ENCODE measurements at regions of chr6 and their contacts with region 1.

Region 1: GRCh38 chr6:85593438-85594196 is at the start of gene SNX14:
- DNase-seq: peak; percentile 94 to 97 (median 96)
- H3K4me3 ChIP-seq: peak within 1 kb of the TSS; percentile 59
- H3K27ac ChIP-seq: peak within 1 kb of the TSS; percentile 80 to 91
- H3K4me1 ChIP-seq: peaks cover 4% of the 10 kb centered on the region
- H3K27me3 ChIP-seq: no peaks in the 10 kb centered on the region
- CTCF ChIP-seq: peak in 1 of 3 donors; percentile 50
- EP300 ChIP-seq: no peak
- POLR2A ChIP-seq: peak; percentile 68
- total RNA-seq, gene SNX14: 44.1 to 80.2 (median 64.0) TPM

Region 2: DNA sequence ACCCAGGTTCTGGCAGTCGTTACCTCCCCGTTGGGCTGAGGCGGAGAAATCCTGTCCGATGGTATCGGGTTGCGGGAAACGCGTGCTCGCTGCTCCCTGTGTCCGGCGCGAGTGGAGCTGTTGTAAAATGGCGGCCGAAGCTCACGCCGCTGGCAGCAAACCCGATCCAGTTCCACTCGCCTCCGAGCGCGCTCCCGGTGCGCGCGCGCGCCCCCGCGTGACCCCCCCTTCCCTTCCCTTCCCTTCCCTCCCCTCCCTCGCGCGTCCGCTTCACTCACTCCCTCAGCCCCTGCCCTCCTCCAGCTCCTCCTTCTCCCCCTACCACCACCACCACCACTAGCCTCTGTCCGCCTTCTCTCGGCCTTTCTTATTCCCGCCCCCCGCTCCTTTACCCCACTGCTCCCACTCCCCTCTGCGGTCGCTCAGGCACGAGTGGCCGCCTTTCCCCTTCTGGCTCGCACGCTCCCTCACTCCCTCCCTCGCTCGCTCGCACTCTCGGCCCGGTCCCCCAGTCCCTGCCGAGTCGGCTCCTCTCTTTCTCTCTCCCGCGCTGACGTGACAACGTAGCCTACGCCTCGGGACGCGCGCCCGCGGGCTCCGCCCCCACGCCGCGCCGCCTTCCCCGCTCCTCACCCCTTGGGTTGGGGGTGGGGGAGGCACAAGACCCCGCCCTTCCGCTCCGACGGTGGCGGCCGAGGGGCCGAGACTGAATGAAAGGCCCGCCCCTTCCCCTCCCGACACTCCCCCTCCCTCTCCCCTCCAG is 49.3 kb after region 1 on chr6 and contains the start of gene SYNCRIP:
- intact Hi-C with region 1: loop called in 2 of 4 experiments (anchors 1 to 5 kb)
- DNase-seq: peak; percentile 99
- H3K4me3 ChIP-seq: peak within 1 kb of the TSS; percentile 77
- H3K27ac ChIP-seq: peak within 1 kb of the TSS; percentile 93 to 96
- H3K4me1 ChIP-seq: peaks cover 6% of the 10 kb centered on the region
- H3K27me3 ChIP-seq: no peaks in the 10 kb centered on the region
- CTCF ChIP-seq: no peak
- EP300 ChIP-seq: peak; percentile 59
- POLR2A ChIP-seq: peak; percentile 96
- total RNA-seq, gene SYNCRIP: 45.5 to 109 (median 92.8) TPM

Region 3: DNA sequence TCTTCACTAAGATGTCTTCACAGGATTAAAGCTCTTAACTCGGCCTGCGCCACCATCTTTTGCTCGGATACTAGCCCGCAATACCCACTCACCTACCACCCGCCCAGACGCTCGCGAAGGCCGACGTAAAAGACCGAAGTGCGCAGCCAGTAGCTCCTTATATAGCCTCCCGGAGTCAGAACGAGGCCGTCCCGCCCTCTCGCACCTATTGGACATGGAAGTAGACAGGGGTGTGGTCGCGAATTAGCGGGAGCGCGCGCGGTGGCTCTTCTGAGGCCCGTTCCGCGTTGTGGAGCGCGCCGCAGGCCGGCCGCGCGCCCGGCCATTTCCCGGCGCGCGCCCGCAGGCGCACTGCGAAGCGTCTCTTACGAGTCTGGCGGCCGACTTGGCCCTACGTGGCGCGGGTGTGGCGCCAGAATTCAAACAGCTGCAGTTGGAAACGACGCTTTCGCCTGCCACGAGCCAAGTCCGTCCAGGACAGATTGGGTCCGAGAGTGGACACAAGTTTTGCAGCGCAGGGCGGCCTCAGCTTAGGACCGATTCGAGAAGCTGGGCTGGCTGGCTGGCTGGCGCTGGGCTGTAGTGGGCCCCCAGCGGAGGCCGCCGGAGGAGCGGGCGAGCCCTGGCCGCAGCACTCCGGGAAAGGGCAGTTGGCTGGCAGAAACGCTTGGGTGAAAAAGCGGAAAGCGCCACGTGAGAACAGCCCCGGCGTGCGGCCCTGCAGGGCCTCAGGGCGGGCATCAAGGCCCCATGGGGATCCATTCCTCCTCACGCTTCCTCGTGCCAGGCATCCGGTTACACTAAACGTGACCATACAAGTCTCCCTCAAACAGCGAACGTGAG is 85.2 kb after region 1 on chr6:
- intact Hi-C with region 1: loop called in 2 of 4 experiments (anchors 5 kb)
- DNase-seq: peak; percentile 98 to 99 (median 98)
- H3K4me3 ChIP-seq: peak overlapping the region; percentile 90
- H3K27ac ChIP-seq: peak overlapping the region; percentile 46 to 71
- H3K4me1 ChIP-seq: peaks cover 6% of the 10 kb centered on the region
- H3K27me3 ChIP-seq: no peaks in the 10 kb centered on the region
- CTCF ChIP-seq: peak in 1 of 3 donors; percentile 28
- EP300 ChIP-seq: no peak
- POLR2A ChIP-seq: peak; percentile 99

Measured in ovary (tissue), 10 donors.